ENCODE measurements at regions of chr1 and their contacts with region 1.

Region 1: DNA sequence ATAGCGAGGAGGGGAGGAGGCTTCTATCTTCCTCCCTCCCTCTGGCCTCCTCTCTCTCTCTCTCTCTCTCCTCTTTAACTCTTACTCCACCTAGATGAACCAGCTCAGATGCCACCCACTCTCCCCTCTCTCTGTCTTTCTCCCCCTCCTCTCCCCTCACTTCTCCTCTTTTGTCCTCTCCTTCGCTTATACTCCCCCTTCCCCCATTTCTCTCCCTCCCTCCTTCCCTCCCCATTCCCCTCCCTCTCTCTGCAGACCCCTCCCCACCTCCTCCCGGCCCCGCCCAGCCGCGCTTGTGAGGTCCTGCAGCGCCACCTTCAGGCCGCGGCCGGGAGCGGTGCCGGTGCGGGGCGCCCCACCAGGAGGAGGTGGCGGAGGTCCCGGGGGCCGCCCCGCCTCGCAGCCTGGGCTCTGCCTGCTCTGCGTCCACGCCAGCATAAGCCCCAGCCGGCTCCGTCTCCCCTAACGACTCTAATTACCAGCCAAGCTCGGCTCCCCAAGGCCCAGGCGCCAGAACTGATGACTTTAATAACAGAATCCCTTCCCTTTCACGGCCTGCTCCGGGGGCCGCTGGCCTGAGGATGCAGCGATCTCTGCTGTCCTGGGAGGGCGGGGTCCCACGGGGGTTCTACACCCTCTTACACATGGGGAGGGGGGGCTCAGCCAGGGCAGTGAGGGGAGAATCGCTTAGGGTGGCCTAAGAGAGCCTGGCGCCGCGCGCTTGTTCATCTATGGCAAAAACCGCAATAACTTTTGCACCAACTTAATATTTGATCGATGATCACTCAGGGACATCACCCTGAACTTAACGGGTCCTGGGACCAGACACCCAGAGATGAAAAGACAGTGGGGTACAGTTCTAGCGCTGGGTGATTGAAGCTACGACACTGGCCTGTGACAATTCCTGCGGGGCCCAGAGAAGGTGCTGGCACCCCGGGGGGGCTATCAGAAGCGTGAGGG is 637.3 kb downstream of the MATN1 start:
- DNase-seq: peak; percentile 50
- H3K4me3 Mint-ChIP-seq: no peak overlapping the region
- H3K27ac Mint-ChIP-seq: no peak overlapping the region
- H3K4me1 Mint-ChIP-seq: no peaks in the 10 kb centered on the region
- H3K27me3 Mint-ChIP-seq: peaks cover 49% of the 10 kb centered on the region

Region 2: GRCh38 chr1:29235955-29236684 is 850.0 kb before region 1 on chr1 and contains the start of gene PTPRU:
- CTCF ChIA-PET with region 1: no interaction called
- intact Hi-C with region 1: loop called (anchors 5 kb)
- DNase-seq: peak; percentile 77
- H3K4me3 Mint-ChIP-seq: peak within 1 kb of the TSS; percentile 65
- H3K27ac Mint-ChIP-seq: no peak within 1 kb of the TSS
- H3K4me1 Mint-ChIP-seq: peaks cover 17% of the 10 kb centered on the region
- H3K27me3 Mint-ChIP-seq: peaks cover 42% of the 10 kb centered on the region
- total RNA-seq, gene PTPRU: 0.15 to 0.38 TPM

Region 3: DNA sequence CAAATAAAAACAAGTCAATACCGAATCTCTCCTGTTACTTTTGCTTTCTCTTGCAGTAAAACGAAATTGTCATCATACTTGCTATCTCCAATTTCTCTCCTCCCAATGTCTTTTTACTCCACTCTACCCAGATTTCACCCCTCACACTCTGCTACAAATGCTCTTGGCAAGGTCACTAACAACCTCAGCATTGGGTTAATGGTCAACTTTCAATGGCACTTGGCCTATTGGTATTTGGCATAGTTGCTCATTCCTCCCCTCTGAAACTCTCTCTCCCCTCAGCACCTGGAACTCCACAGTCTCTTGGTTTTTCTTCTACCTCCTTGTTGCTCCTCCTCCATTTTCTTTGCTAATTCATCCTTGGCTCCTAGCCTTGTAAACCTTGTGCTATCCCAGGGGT is 482.5 kb before region 1 on chr1:
- CTCF ChIA-PET with region 1: no interaction called
- intact Hi-C with region 1: no loop called
- DNase-seq: no peak
- H3K4me3 Mint-ChIP-seq: no peak overlapping the region
- H3K27ac Mint-ChIP-seq: no peak overlapping the region
- H3K4me1 Mint-ChIP-seq: no peaks in the 10 kb centered on the region
- H3K27me3 Mint-ChIP-seq: peaks cover 15% of the 10 kb centered on the region

Region 4: DNA sequence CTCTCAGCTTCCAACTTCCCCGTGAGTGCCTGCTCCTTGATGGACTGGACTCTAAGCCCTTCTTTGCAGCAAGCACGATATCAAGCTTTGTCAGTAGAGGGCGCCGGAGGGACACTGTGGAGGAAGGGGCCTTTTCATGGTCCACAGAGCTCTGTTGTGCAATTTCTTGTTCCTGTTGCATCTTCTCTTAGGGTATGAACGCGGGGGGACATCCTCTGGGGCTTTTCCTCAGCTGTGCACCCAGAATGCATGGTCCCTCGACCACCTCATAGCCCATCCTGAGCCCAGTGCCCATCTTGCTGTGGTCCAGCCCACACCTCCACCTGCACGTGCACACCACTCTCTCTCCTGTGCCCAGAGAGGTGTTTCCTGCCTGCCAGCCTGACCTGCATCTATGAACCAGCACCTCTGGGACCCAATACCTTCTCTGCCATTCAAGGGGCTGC is 293.0 kb before region 1 on chr1:
- CTCF ChIA-PET with region 1: no interaction called
- intact Hi-C with region 1: loop called (anchors 5 kb)
- DNase-seq: peak; percentile 89
- H3K4me3 Mint-ChIP-seq: no peak overlapping the region
- H3K27ac Mint-ChIP-seq: no peak overlapping the region
- H3K4me1 Mint-ChIP-seq: no peaks in the 10 kb centered on the region
- H3K27me3 Mint-ChIP-seq: peaks cover 5% of the 10 kb centered on the region

Region 5: GRCh38 chr1:29912425-29912824 is 173.7 kb before region 1 on chr1:
- CTCF ChIA-PET with region 1: no interaction called
- intact Hi-C with region 1: loop called (anchors 10 kb)
- DNase-seq: peak; percentile 22
- H3K4me3 Mint-ChIP-seq: no peak overlapping the region
- H3K27ac Mint-ChIP-seq: no peak overlapping the region
- H3K4me1 Mint-ChIP-seq: no peaks in the 10 kb centered on the region
- H3K27me3 Mint-ChIP-seq: peaks cover 14% of the 10 kb centered on the region

Region 6: GRCh38 chr1:30707412-30708360 is 621.6 kb after region 1 on chr1:
- CTCF ChIA-PET with region 1: interaction called, 3 read pairs
- intact Hi-C with region 1: loop called (anchors 10 kb)
- DNase-seq: peak; percentile 82
- H3K4me3 Mint-ChIP-seq: no peak overlapping the region
- H3K27ac Mint-ChIP-seq: no peak overlapping the region
- H3K4me1 Mint-ChIP-seq: no peaks in the 10 kb centered on the region
- H3K27me3 Mint-ChIP-seq: no peaks in the 10 kb centered on the region

Measured in activated naive CD4-positive, alpha-beta T cell treated with anti-CD3 and anti-CD28 coated beads for 36 hours (primary cell).